HEK293 (cell line): ENCODE measurements at regions of chr1 and their contacts with region 1.

Region 1: DNA sequence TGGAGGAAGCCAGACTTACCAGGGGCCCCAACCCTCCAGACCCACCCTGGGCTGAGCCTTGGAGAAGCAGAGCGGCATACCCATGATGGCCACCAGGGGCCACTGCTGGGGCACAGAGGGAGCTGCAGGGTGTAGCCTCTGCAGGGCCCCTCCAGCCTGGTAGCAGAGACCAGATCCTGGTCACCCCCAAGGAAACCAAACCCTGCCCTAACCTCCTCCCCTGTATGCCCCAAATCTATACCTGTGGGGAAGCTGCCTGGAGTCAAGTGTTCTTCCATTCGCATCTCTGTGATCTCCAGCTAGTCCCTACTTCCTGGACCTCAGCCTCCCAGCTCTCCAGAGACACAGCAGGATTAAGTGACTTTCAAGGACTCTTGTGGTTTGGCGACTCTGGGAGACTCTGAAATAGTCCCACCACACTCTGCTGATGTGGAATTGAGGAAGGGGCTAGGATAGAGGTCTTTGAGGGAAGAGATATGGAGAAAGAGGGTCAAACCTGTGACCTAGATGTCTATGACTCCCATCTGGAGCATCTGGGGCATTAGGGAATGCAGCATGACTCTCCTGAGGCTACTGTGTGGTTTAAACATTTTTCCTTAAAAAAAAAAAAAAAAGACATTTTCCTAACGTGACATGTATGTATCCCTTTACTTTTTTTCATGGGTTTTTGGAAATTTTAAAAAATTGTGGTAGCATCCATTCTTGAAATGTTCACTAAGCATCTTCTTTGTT is 119.2 kb upstream of the IPO9 start:
- H3K4me3 ChIP-seq: no peak overlapping the region
- H3K27ac ChIP-seq: no peak overlapping the region
- H3K4me1 ChIP-seq: peaks cover 12% of the 10 kb centered on the region
- CTCF ChIP-seq: peak; percentile 83

Region 2: GRCh38 chr1:201530741-201531531 is 178.8 kb before region 1 on chr1:
- CTCF ChIA-PET with region 1: interaction called, 45 read pairs
- POLR2A ChIA-PET with region 1: interaction called, 4 read pairs
- H3K4me3 ChIP-seq: no peak overlapping the region
- H3K27ac ChIP-seq: no peak overlapping the region
- H3K4me1 ChIP-seq: peaks cover 4% of the 10 kb centered on the region; the same call in 1 of the 2 replicates
- CTCF ChIP-seq: peak; percentile 87

Region 3: GRCh38 chr1:201559679-201560162 is 150.0 kb before region 1 on chr1:
- CTCF ChIA-PET with region 1: interaction called, 247 read pairs
- POLR2A ChIA-PET with region 1: no interaction called
- H3K4me3 ChIP-seq: no peak overlapping the region
- H3K27ac ChIP-seq: no peak overlapping the region
- H3K4me1 ChIP-seq: no peaks in the 10 kb centered on the region
- CTCF ChIP-seq: peak; percentile 99

Region 4: DNA sequence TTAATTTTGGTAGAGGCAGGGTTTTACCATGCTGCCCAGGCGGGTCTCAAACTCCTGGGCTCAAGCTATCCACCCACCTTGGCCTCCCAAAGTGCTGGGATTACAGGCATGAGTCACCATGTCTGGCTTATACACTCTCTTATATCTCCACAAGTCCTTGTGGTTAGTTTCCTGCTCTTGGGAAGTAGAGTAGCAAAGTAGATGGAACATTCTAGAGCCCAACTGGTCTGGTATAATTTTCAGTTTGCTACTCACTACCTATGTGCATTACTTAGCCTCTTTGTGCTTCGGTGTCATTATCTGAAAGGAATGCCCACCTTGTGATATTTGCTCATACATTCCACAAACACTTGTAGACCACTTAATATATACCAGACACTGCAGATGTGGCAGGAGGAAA is 22.6 kb after region 1 on chr1:
- CTCF ChIA-PET with region 1: interaction called, 11 read pairs
- POLR2A ChIA-PET with region 1: interaction called, 4 read pairs
- H3K4me3 ChIP-seq: no peak overlapping the region
- H3K27ac ChIP-seq: no peak overlapping the region
- H3K4me1 ChIP-seq: no peaks in the 10 kb centered on the region
- CTCF ChIP-seq: no peak

Region 5: DNA sequence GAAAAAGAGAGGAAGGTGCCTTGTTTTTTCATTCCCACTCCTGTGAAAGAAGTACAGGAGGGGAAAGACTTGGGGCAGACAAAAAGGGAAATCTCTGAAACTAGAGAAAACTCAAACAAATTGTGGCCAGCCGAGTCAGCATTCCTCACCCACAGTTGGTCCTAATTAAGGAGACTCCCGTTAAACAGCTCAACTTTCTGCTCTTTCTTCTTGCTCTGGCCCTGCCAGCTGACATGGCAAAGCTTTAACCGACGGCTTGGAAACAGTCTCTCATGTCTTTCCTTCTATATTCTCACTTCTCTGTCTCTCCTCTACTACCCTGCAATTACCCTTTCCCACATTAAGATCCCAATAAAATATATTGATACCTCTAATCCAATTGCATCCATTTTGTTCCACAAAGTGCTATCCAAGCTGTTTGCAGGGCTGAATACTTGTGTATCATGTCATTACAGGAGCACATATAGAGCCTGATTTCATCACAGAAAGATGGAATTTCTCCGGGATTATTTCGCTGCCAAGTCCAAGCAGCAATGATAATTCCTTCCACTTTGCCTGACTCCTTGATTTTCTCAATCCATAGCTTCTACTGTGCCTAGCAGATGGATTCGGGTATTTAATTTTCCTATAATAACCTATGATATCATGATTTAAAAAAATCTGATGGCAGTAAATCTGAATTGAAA is 53.9 kb after region 1 on chr1:
- CTCF ChIA-PET with region 1: interaction called, 17 read pairs
- POLR2A ChIA-PET with region 1: interaction called, 4 read pairs
- H3K4me3 ChIP-seq: no peak overlapping the region
- H3K27ac ChIP-seq: no peak overlapping the region
- H3K4me1 ChIP-seq: peaks cover 7% of the 10 kb centered on the region
- CTCF ChIP-seq: no peak

Region 6: DNA sequence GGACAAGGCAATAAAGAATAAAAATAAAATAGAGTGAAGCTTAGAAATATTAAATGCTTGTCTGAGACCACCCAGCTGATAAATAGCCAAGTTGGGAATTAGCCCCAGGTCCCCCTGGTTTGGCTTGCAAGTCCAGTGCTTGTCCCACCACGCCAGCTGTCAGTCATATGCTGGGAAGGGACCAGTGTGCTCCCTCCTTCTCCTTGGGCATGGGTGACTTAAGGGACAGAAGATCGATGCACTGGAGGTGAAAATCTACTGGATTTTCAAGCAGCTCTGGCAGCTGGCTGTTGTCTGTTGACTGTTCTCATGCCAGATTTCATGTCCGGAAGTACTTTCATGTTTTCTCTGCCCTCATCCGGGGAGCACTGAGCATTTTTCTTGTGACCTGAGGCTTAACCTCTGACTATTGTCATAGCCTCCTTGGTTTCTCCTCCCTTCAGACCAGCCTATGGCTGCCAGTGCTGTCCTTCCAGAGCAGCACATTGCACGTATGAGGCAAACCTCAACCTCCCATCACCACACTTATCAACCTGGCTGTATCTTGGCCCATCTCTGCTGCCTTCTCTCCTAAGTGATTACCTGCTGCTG is 224.2 kb after region 1 on chr1:
- CTCF ChIA-PET with region 1: no interaction called
- POLR2A ChIA-PET with region 1: no interaction called
- H3K4me3 ChIP-seq: no peak overlapping the region
- H3K27ac ChIP-seq: no peak overlapping the region
- H3K4me1 ChIP-seq: no peaks in the 10 kb centered on the region
- CTCF ChIP-seq: no peak

Region 7: GRCh38 chr1:203069030-203069747 is 1359.5 kb after region 1 on chr1:
- CTCF ChIA-PET with region 1: no interaction called
- POLR2A ChIA-PET with region 1: no interaction called
- H3K4me3 ChIP-seq: no peak overlapping the region
- H3K27ac ChIP-seq: no peak overlapping the region
- H3K4me1 ChIP-seq: no peaks in the 10 kb centered on the region
- CTCF ChIP-seq: no peak